Ovary (tissue), 10 donors: ENCODE measurements at regions of chr3 and their contacts with region 1.

Region 1: GRCh38 chr3:171801738-171802600 is 8.3 kb downstream of the PLD1 start:
- DNase-seq: no peak
- H3K4me3 ChIP-seq: no peak overlapping the region
- H3K27ac ChIP-seq: peak overlapping the region; percentile 32 to 83
- H3K4me1 ChIP-seq: peaks cover 22% of the 10 kb centered on the region
- H3K27me3 ChIP-seq: no peaks in the 10 kb centered on the region
- CTCF ChIP-seq: no peak
- EP300 ChIP-seq: no peak
- POLR2A ChIP-seq: no peak

Region 2: DNA sequence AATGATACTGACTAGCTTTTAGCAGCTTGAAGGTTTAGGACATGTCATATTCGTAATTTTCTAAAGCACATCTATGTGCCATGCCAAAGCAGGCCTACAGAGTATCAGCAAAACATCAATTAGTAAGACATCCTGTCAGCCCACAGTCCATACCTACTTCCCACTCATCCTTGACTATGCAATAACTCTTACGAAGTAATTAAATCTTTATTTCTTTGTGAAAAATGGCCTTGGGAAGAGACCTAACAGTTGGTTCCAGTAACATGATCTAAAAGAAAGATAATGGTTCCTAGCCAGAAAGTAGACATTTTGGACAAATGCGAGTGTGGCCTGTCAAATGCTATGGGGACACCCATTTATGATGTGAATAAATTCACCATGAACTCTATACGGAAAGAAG is 169.2 kb before region 1 on chr3:
- intact Hi-C with region 1: no loop called
- DNase-seq: no peak
- H3K4me3 ChIP-seq: no peak overlapping the region
- H3K27ac ChIP-seq: no peak overlapping the region
- H3K4me1 ChIP-seq: no peaks in the 10 kb centered on the region
- H3K27me3 ChIP-seq: no peaks in the 10 kb centered on the region
- CTCF ChIP-seq: no peak
- EP300 ChIP-seq: no peak
- POLR2A ChIP-seq: no peak

Region 3: GRCh38 chr3:171690281-171690680 is 111.7 kb before region 1 on chr3:
- intact Hi-C with region 1: no loop called
- DNase-seq: no peak
- H3K4me3 ChIP-seq: no peak overlapping the region
- H3K27ac ChIP-seq: no peak overlapping the region
- H3K4me1 ChIP-seq: peaks cover 4% of the 10 kb centered on the region
- H3K27me3 ChIP-seq: no peaks in the 10 kb centered on the region
- CTCF ChIP-seq: no peak
- EP300 ChIP-seq: no peak
- POLR2A ChIP-seq: no peak

Region 4: DNA sequence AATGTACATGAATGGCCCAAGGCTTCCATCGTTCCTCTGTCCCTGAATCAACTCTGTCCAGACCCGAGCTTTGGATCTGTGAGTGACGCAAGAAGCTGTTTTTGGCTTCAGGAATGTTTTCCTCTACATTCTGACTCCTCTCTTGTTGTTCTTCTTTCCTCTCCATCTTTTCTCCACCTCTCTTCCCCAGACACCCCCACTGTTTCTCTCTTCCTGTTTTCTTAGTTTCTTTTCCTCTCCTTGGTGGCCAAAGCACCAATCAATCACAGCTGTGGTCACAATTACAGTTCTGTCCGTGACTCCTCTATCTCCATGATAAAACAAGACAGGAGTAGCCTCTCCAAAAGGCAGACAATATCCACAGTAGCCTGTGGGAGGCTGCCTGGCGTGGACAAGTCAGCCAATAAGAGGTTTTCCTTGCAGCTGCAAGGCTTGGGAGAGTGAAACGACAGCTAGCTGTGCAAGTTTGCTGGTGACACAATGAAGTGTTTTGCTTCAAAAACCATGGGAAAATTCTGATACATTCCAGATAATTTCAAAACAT is 36.3 kb after region 1 on chr3:
- intact Hi-C with region 1: loop called in 1 of 4 experiments (anchors 5 kb)
- DNase-seq: peak; percentile 64 to 74 (median 69)
- H3K4me3 ChIP-seq: no peak overlapping the region
- H3K27ac ChIP-seq: peak overlapping the region in 1 of 2 donors; percentile 64
- H3K4me1 ChIP-seq: peaks cover 13% of the 10 kb centered on the region
- H3K27me3 ChIP-seq: no peaks in the 10 kb centered on the region
- CTCF ChIP-seq: peak in 2 of 3 donors; percentile 26 to 53
- EP300 ChIP-seq: no peak
- POLR2A ChIP-seq: no peak